ENCODE measurements at regions of chr1 and their contacts with region 1.

Region 1: GRCh38 chr1:171644805-171645483 is 7.5 kb downstream of the MYOC start:
- DNase-seq: peak; percentile 86
- ATAC-seq: peak; percentile 91
- H3K4me3 ChIP-seq: no peak overlapping the region
- H3K27ac ChIP-seq: peak overlapping the region; percentile 35 to 77
- H3K4me1 ChIP-seq: no peaks in the 10 kb centered on the region
- H3K27me3 ChIP-seq: no peaks in the 10 kb centered on the region

Region 2: GRCh38 chr1:171715813-171716251 is 70.9 kb after region 1 on chr1:
- intact Hi-C with region 1: loop called (anchors 1 to 5 kb)
- DNase-seq: no peak
- ATAC-seq: peak; percentile 67
- H3K4me3 ChIP-seq: no peak overlapping the region
- H3K27ac ChIP-seq: peak overlapping the region in 1 of 2 donors; percentile 8
- H3K4me1 ChIP-seq: peaks cover 0 to 5% of the 10 kb centered on the region in 2 donors
- H3K27me3 ChIP-seq: no peaks in the 10 kb centered on the region

Region 3: DNA sequence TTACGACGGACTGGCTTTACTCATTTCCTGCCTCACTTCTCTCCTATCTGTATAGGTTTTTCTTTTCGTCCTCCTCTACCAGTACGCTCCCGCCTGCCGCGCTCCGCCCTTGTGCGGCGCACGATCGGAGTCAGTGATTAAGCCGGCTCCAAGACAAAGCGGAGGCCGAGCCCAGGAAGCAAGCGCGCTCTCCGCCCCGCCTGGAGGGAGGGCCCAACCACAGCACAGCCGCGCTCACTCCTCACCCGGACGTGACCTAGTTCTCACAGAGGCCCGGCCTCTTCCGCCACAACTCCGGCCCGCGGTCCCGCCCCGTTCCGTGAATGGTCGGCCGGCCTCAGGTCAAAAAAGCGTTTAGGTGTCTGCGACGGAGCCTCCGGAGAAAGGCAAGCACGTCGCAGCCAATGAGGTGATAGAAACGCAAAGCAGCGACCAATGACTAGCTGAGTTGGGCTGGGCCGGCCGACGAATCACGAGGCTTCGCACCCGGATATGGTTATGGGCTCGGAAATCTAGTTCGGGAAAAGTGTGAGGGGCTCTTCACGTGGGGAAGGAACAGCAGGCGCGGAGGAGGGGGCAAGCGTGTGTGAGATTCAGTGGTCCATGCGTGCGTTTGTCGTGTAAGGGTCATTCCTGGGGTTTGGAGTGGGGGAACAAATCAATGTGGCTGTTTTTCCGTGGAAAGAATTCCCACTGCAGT is 136.4 kb after region 1 on chr1 and contains the start of gene METTL13:
- intact Hi-C with region 1: loop called (anchors 1 to 10 kb)
- DNase-seq: peak; percentile 99
- ATAC-seq: peak; percentile 100
- H3K4me3 ChIP-seq: peak within 1 kb of the TSS; percentile 50 to 96
- H3K27ac ChIP-seq: peak within 1 kb of the TSS; percentile 51 to 93
- H3K4me1 ChIP-seq: peaks cover 0 to 4% of the 10 kb centered on the region in 2 donors
- H3K27me3 ChIP-seq: no peaks in the 10 kb centered on the region
- total RNA-seq, gene METTL13: 15.3 to 17.9 TPM

Region 4: DNA sequence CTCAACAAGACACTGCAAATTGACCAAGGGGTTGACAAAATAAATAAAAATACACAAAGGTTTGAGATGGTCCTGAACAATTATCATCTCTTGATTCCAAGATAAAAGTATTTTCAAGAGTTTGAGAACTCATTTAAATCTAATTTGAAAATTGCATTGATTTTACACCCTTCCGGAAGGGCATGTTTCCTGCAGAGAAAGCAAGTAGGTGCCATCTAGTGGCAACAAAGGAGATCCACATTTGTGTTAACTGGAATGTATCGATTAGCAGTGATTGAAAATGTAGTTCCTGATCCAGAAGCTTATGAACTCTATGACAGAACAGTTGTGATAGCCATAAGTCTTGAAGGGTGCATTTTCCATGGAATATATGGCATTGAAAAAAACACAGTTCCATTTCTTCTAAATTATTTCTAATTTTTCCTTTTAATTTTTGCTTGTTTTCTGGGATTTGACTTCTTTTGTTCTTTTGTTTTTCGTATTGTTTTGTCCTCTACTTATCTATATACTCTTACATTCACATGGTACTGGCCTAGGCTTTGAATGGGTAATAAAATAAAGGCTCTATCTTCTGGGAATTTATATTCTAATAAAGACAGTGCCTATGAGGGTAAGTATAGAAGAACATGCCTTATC is 340.0 kb after region 1 on chr1:
- intact Hi-C with region 1: loop called in 1 of 2 experiments (anchors 5 kb)
- DNase-seq: no peak
- ATAC-seq: no peak
- H3K4me3 ChIP-seq: no peak overlapping the region
- H3K27ac ChIP-seq: no peak overlapping the region
- H3K4me1 ChIP-seq: no peaks in the 10 kb centered on the region
- H3K27me3 ChIP-seq: no peaks in the 10 kb centered on the region

Measured in aorta (tissue), 5 donors.